Cardiac septum (tissue), 1 donor: ENCODE measurements at regions of chr3 and their contacts with region 1.

Region 1: DNA sequence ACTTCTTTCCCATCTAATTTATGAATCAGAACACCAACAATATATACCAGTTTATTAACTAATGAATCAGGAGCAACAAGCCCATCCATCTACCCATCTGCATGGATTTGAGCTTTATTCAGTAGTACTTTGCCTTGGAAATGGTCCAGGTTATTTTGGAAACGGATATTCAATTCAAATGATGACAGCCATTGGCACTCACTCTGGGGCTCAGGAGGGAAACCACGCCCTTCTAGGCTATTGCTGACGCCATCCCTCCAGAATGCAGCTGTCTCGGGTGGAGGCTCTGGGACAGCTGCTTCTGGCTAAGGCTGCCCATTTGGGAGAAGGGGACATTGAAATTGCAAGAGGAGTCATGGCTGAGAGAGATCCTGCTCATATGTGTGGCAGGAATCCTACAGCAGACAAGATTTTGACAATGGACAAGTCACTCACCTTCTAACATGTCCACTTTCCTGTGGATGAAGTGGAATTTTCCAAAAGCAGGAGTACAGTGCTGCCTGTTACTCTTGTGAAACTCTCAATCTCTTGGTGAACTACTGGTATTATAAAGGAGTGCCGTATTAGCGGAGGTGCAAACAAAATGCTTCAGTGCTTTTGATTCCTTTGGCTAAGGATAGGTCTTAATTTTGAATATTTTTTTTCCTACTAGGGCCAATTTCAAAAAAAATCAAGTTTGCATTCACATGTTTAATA is 29.3 kb upstream of the TRAK1 start:
- DNase-seq: peak; percentile 92

Region 2: DNA sequence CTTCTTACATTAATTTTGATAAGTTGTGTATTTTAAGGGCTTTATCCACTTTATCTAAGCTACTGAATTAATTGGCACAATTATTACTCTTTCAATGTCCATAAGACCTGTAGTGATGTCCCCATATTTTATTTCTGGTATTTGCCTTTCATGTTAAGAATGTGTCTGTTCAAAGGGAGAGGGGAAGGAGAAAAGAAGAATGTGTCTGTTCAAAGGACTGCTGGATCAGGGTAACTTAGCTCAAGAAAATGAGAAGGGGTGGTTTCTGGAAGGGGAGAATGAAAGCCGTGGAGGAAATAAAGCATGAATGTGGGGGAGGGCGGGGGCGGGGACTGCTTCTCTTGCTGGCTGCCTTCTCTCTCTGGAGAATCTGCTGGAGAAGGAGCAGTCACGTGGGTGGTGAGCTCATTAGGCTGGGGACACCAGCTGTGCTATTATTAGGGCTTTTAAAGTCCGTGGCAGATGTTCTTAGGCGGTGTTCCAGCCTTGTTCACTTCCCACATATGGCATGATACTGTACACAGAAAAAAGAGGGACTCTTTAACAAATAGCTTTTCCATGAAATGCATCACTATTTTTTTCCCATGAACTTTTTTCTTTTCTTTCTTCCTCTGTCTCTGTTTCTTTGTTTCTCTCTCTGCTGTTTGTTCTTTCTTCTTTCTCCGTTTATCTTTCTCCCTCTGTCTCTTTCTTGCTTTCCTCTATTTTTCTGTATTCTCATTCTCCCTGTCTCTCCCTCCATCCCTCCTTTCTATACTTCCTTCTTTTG is 36.3 kb before region 1 on chr3:
- intact Hi-C with region 1: loop called (anchors 1 kb)
- DNase-seq: peak; percentile 94

Region 3: DNA sequence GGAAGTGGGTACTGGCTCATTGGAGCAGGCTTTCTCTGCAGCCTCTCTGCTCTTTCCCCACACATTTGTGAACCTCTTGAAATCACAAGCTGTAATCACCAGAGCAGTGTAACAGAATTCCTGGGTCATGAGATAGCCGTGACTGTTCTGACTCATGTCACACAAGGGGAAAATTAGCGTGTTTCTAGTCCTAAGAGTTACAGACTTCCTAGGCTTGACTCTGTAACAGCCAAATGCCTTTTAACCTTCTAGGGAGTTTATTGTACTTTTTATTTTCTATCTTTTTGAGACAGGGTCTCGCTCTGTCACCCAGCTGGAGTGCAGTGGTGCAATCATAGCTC is 25.4 kb before region 1 on chr3:
- intact Hi-C with region 1: loop called (anchors 1 kb)
- DNase-seq: no peak

Region 4: DNA sequence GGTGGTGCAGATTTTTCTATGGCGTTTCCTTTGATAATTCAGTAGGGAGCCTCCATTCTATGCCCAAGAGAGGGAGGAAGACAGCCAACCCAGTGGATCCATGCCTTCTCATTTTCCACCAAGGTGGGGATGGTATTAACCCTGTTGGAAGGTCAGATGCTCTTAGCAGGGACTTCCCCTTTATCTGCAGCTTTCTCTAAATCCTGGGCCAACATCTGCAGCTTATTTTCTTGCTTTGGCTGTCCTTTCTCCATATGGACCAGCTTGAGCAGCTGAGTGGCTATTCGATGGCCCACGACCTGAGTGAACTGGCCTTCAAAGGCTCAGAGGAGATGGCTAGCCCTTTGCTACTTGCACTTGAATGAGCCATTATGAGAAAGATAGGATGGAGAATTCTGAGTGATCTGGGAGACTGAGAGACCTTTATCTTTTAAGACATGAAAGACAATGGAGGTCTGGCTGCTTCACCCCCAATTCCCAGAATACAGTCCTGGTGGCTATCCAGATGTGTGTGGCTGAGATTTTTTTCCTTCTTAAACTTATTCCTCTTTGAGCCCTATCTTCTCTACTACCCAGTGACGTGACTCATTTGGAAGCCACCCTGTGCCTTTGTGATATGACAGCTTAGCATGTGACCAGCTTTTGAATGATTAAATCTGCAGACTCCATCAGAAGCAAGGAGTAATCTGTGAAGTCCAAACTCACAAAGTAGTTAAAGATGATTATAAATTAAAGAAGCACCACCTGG is 10.3 kb before region 1 on chr3:
- intact Hi-C with region 1: no loop called
- DNase-seq: peak; percentile 29

Region 5: DNA sequence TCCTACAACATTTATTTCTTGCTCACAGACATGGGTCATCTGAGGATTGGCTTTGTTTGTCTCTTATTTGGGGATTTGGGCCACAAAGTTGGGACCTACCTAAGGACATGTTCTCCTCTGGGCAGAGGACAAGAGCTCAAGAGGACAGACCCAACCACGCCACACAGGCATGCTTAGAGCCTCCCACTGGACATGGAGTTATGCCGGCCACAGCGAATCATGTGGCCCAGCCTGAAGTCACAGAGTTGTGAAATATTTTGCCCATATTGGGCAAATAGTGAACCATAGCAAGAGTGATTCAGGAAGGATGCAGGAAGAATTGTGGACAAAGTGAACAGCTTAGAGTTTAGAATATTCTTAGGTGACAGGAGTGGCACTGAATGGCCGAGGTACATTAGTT is 39.2 kb after region 1 on chr3:
- intact Hi-C with region 1: loop called (anchors 5 kb)
- DNase-seq: no peak